Naive thymus-derived CD4-positive, alpha-beta T cell (primary cell): ENCODE measurements at regions of chr11 and their contacts with region 1.

Region 1: GRCh38 chr11:105034813-105035620 is at the start of gene CASP1:
- DNase-seq: peak in 7 of 9 donors; percentile 26 to 52 (median 38)
- ATAC-seq: peak; percentile 82
- H3K4me3 ChIP-seq: peak within 1 kb of the TSS; percentile 70
- H3K4me3 Mint-ChIP-seq: peak within 1 kb of the TSS; percentile 90 to 98 (median 94)
- H3K27ac ChIP-seq: peak within 1 kb of the TSS; percentile 85
- H3K27ac Mint-ChIP-seq: peak within 1 kb of the TSS; percentile 92 to 100 (median 96)
- H3K4me1 ChIP-seq: peaks cover 19 to 37% of the 10 kb centered on the region in 2 donors
- H3K4me1 Mint-ChIP-seq: peaks cover 32 to 63% (median 59%) of the 10 kb centered on the region in 7 donors
- H3K27me3 ChIP-seq: no peaks in the 10 kb centered on the region
- H3K27me3 Mint-ChIP-seq: no peaks in the 10 kb centered on the region
- total RNA-seq, gene CASP1: 29.5 to 141 (median 51.8) TPM

Region 2: GRCh38 chr11:104700609-104701008 is 334.4 kb before region 1 on chr11:
- CTCF ChIA-PET with region 1: no interaction called
- POLR2A ChIA-PET with region 1: interaction called, 3 read pairs
- intact Hi-C with region 1: loop called in 1 of 2 experiments (anchors 5 kb)
- DNase-seq: peak in 5 of 9 donors; percentile 9 to 46 (median 30)
- ATAC-seq: peak; percentile 73
- H3K4me3 ChIP-seq: no peak overlapping the region
- H3K4me3 Mint-ChIP-seq: peak overlapping the region in 7 of 10 donors; percentile 11 to 65 (median 35)
- H3K27ac ChIP-seq: no peak overlapping the region
- H3K27ac Mint-ChIP-seq: peak overlapping the region in 6 of 9 donors; percentile 17 to 70 (median 28)
- H3K4me1 ChIP-seq: peaks cover 23 to 24% of the 10 kb centered on the region in 2 donors
- H3K4me1 Mint-ChIP-seq: peaks cover 22 to 42% (median 35%) of the 10 kb centered on the region in 7 donors
- H3K27me3 ChIP-seq: no peaks in the 10 kb centered on the region
- H3K27me3 Mint-ChIP-seq: no peaks in the 10 kb centered on the region

Region 3: DNA sequence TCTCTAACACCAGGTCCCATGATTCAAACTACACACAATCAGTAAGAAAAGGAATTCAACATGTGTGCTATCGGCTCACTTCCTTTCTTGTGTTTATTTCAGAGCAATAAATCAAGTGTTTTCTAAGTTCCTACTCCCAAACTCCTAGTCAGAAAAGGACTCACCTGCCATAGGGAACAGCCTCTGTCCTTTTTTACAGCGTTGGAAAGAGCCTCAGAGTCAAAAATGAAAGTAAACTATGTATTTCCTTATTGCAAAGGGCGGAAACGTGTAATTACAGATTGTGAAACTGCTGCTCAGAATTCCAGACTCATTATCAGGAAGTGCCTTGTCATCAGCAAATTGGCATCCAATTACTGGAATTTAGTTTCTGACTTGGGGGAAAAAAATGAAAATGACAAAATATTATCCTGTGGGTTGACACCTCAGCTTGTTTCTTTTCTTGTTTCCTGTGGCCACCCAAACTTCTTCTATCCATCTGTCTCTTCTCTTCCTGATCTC is 66.6 kb before region 1 on chr11 and contains the start of gene CASP4:
- CTCF ChIA-PET with region 1: no interaction called
- POLR2A ChIA-PET with region 1: no interaction called
- intact Hi-C with region 1: loop called in 1 of 2 experiments (anchors 2 kb)
- DNase-seq: peak in 7 of 9 donors; percentile 18 to 57 (median 48)
- ATAC-seq: peak; percentile 82
- H3K4me3 ChIP-seq: peak within 1 kb of the TSS; percentile 67
- H3K4me3 Mint-ChIP-seq: peak within 1 kb of the TSS; percentile 90 to 99 (median 96)
- H3K27ac ChIP-seq: peak within 1 kb of the TSS; percentile 89
- H3K27ac Mint-ChIP-seq: peak within 1 kb of the TSS; percentile 94 to 100 (median 97)
- H3K4me1 ChIP-seq: peaks cover 16 to 36% of the 10 kb centered on the region in 2 donors
- H3K4me1 Mint-ChIP-seq: peaks cover 35 to 47% (median 43%) of the 10 kb centered on the region in 7 donors
- H3K27me3 ChIP-seq: no peaks in the 10 kb centered on the region
- H3K27me3 Mint-ChIP-seq: no peaks in the 10 kb centered on the region
- total RNA-seq, gene CASP4: 60.7 to 94.7 (median 76.9) TPM

Region 4: GRCh38 chr11:105007463-105007862 is 27.6 kb before region 1 on chr11:
- CTCF ChIA-PET with region 1: no interaction called
- POLR2A ChIA-PET with region 1: no interaction called
- intact Hi-C with region 1: loop called in 1 of 2 experiments (anchors 2 kb)
- DNase-seq: no peak
- ATAC-seq: no peak
- H3K4me3 ChIP-seq: no peak overlapping the region
- H3K4me3 Mint-ChIP-seq: no peak overlapping the region
- H3K27ac ChIP-seq: no peak overlapping the region
- H3K27ac Mint-ChIP-seq: no peak overlapping the region
- H3K4me1 ChIP-seq: no peaks in the 10 kb centered on the region
- H3K4me1 Mint-ChIP-seq: peaks cover 0 to 3% (median 0%) of the 10 kb centered on the region in 7 donors
- H3K27me3 ChIP-seq: no peaks in the 10 kb centered on the region
- H3K27me3 Mint-ChIP-seq: no peaks in the 10 kb centered on the region

Region 5: DNA sequence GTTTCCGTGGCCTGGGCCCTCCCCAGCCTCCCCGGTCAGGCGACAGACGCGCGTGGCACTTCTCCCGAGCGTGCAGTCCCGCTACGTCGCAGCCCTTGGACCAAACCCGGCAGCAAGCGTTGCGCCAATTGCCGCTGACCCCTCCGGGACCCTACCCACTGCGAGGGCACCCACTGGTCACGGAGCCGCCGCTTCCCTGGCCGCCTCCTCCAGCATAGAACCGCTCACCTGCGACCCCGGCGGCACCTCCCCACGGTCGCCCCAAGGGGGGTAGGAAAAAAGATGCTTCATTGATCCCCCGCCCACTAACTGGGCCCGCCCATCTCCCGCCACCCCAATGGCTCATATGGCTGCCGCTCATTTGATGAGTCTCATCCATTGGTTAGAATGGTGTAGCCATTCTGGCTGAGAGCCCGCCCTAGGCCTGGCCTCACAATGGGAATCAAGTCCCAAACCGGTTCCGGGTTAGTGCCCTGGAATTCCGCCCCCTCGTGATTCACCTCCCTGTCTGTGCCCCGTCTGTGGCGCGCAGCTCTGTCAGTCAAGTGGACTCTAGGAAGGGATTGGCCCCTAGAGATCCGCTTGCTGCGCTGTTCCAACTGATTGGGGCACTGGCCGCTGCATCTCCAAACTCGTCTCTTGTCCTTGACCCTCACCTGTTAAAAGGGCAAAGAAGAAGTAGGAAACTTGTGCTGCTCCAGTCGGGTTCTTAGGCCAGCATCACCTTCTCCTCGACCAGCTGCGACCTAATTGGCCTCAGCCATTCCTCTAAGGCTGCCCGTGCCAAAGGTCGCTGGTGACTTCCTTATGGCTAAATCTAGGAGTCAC is 987.2 kb after region 1 on chr11 and contains the start of gene MSANTD4:
- CTCF ChIA-PET with region 1: no interaction called
- POLR2A ChIA-PET with region 1: no interaction called
- intact Hi-C with region 1: loop called in 1 of 2 experiments (anchors 10 kb)
- DNase-seq: peak; percentile 89 to 97 (median 95)
- ATAC-seq: peak; percentile 98
- H3K4me3 ChIP-seq: peak within 1 kb of the TSS; percentile 82
- H3K4me3 Mint-ChIP-seq: peak within 1 kb of the TSS; percentile 91 to 99 (median 94)
- H3K27ac ChIP-seq: peak within 1 kb of the TSS; percentile 66
- H3K27ac Mint-ChIP-seq: peak within 1 kb of the TSS; percentile 82 to 96 (median 89)
- H3K4me1 ChIP-seq: peaks cover 10 to 20% of the 10 kb centered on the region in 2 donors
- H3K4me1 Mint-ChIP-seq: peaks cover 34 to 60% (median 49%) of the 10 kb centered on the region in 7 donors
- H3K27me3 ChIP-seq: no peaks in the 10 kb centered on the region
- H3K27me3 Mint-ChIP-seq: peaks cover 0 to 13% (median 6%) of the 10 kb centered on the region in 5 donors
- total RNA-seq, gene MSANTD4: 4.7 to 18.7 (median 15.3) TPM